ENCODE measurements at regions of chr20 and their contacts with region 1.

Region 1: GRCh38 chr20:62327726-62328495 is 25.1 kb downstream of the ADRM1 start:
- DNase-seq: no peak
- H3K4me3 Mint-ChIP-seq: no peak overlapping the region
- H3K27ac Mint-ChIP-seq: no peak overlapping the region
- H3K4me1 Mint-ChIP-seq: no peaks in the 10 kb centered on the region
- H3K27me3 Mint-ChIP-seq: no peaks in the 10 kb centered on the region
- CTCF ChIP-seq: no peak

Region 2: GRCh38 chr20:62186887-62187866 is 140.7 kb before region 1 on chr20:
- CTCF ChIA-PET with region 1: no interaction called
- POLR2A ChIA-PET with region 1: no interaction called
- intact Hi-C with region 1: no loop called
- DNase-seq: no peak
- H3K4me3 Mint-ChIP-seq: peak overlapping the region; percentile 6
- H3K27ac Mint-ChIP-seq: peak overlapping the region; percentile 11
- H3K4me1 Mint-ChIP-seq: peaks cover 21% of the 10 kb centered on the region
- H3K27me3 Mint-ChIP-seq: no peaks in the 10 kb centered on the region
- CTCF ChIP-seq: no peak

Region 3: DNA sequence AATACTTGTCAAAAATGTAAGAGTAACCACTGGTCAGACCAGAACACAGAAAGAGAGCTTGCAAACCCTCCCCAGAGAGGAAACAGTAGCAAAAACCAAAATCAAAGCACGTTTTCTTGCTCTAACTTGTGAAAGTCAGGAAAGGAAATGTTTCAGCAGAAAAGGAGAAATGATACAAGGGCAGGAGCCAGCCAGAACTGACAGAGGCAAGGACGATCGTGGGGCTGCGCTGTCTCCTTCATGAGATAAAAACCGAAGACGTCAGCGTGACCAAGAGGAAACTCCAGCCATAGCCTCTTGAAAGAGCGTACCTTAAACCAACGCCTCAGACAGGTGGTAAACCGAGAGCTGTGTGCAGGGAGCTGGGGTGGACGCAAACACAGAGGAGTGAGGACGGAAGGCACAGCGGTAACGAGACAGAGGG is 11.7 kb after region 1 on chr20:
- CTCF ChIA-PET with region 1: interaction called, 3 read pairs
- POLR2A ChIA-PET with region 1: interaction called, 16 read pairs
- intact Hi-C with region 1: no loop called
- DNase-seq: no peak
- H3K4me3 Mint-ChIP-seq: no peak overlapping the region
- H3K27ac Mint-ChIP-seq: no peak overlapping the region
- H3K4me1 Mint-ChIP-seq: no peaks in the 10 kb centered on the region
- H3K27me3 Mint-ChIP-seq: no peaks in the 10 kb centered on the region
- CTCF ChIP-seq: no peak

Region 4: GRCh38 chr20:62344782-62345181 is 16.9 kb after region 1 on chr20:
- CTCF ChIA-PET with region 1: interaction called, 4 read pairs
- POLR2A ChIA-PET with region 1: interaction called, 16 read pairs
- intact Hi-C with region 1: no loop called
- DNase-seq: no peak
- H3K4me3 Mint-ChIP-seq: no peak overlapping the region
- H3K27ac Mint-ChIP-seq: no peak overlapping the region
- H3K4me1 Mint-ChIP-seq: peaks cover 4% of the 10 kb centered on the region
- H3K27me3 Mint-ChIP-seq: no peaks in the 10 kb centered on the region
- CTCF ChIP-seq: no peak